Heart left ventricle (tissue), 16 donors: ENCODE measurements at regions of chr18 and their contacts with region 1.

Region 1: GRCh38 chr18:25351777-25352628 is at the start of gene ZNF521:
- DNase-seq: peak; percentile 89 to 90 (median 90)
- ATAC-seq: peak; percentile 83 to 93 (median 87)
- H3K4me3 ChIP-seq: peak within 1 kb of the TSS; percentile 52 to 89 (median 78)
- H3K27ac ChIP-seq: peak within 1 kb of the TSS; percentile 80 to 95 (median 91)
- H3K4me1 ChIP-seq: peaks cover 0 to 24% (median 7%) of the 10 kb centered on the region in 12 donors
- H3K27me3 ChIP-seq: peaks cover 0 to 31% (median 0%) of the 10 kb centered on the region in 9 donors
- CTCF ChIP-seq: peak in 8 of 12 donors; percentile 16 to 45 (median 30)
- POLR2A ChIP-seq: peak in 1 of 2 donors; percentile 68
- total RNA-seq, gene ZNF521: 12.2 to 24.4 (median 15.2) TPM

Region 2: GRCh38 chr18:24878289-24878688 is 473.7 kb before region 1 on chr18:
- intact Hi-C with region 1: loop called in 8 of 10 experiments (anchors 2 to 10 kb)
- DNase-seq: peak in 1 of 5 donors; percentile 19
- ATAC-seq: peak; percentile 47 to 71 (median 58)
- H3K4me3 ChIP-seq: no peak overlapping the region
- H3K27ac ChIP-seq: no peak overlapping the region
- H3K4me1 ChIP-seq: peaks cover 0 to 5% (median 0%) of the 10 kb centered on the region in 12 donors
- H3K27me3 ChIP-seq: no peaks in the 10 kb centered on the region
- CTCF ChIP-seq: peak; percentile 35 to 80 (median 66)
- POLR2A ChIP-seq: no peak

Region 3: DNA sequence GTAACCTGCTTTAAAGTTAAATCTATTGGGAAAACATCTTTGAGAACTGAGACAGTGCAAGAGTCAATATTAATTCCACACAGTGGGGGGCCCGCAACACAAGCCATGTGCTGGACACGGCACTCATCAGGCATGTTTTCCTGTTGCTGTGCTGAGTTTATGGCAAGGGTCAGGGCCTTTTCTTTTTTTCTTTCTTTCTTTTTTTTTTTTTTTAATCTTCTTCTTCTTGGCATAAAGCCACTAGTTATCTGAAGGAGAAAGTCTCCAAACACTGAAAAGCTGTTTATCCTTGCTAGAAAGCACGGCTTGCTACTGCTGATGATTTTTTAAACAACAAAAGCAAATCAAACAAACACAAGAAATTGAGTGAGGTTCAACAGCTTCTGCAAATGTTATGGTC is 252.1 kb before region 1 on chr18:
- intact Hi-C with region 1: loop called in 1 of 10 experiments (anchors 10 kb)
- DNase-seq: peak in 1 of 5 donors; percentile 29
- ATAC-seq: peak in 1 of 4 donors; percentile 32
- H3K4me3 ChIP-seq: no peak overlapping the region
- H3K27ac ChIP-seq: no peak overlapping the region
- H3K4me1 ChIP-seq: peaks cover 0 to 36% (median 10%) of the 10 kb centered on the region in 12 donors
- H3K27me3 ChIP-seq: no peaks in the 10 kb centered on the region
- CTCF ChIP-seq: no peak
- POLR2A ChIP-seq: no peak

Region 4: DNA sequence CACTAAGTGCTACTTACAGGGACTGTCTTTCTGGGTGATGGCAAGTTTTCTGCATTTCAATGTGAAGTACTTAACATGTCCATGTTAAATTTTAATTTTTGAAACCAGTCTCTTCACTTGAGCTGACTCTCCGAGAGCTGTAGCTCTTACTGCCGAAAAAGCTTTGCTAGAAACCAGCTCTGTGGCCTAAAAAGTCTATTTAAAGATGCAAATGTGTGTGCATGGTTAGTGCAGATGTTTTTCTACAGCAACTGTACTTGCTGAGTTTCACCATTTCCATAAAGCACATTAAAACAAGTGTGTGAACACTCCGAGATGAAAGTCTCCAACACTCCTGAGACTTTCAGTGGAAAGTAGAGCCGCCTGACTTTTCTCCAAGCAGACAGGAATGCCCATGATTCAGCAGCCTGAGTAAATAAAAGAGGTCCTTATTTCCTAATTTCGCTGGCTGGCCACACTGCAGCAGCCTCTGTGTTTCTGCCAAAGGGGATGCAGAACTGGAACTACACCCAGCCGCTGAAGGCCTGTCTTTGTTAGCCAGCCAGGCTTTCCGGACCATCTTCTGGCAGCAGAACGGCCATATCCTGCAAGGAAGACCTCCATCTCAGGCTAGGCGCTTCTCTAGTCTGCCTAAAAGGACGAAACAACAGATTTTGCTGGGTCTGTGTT is 121.2 kb before region 1 on chr18:
- intact Hi-C with region 1: loop called in 9 of 10 experiments (anchors 2 to 10 kb)
- DNase-seq: peak; percentile 72 to 85 (median 79)
- ATAC-seq: peak; percentile 75 to 92 (median 87)
- H3K4me3 ChIP-seq: peak overlapping the region in 3 of 12 donors; percentile 2 to 27 (median 3)
- H3K27ac ChIP-seq: peak overlapping the region; percentile 43 to 74 (median 64)
- H3K4me1 ChIP-seq: peaks cover 6 to 73% (median 46%) of the 10 kb centered on the region in 12 donors
- H3K27me3 ChIP-seq: no peaks in the 10 kb centered on the region
- CTCF ChIP-seq: no peak
- POLR2A ChIP-seq: no peak

Region 5: DNA sequence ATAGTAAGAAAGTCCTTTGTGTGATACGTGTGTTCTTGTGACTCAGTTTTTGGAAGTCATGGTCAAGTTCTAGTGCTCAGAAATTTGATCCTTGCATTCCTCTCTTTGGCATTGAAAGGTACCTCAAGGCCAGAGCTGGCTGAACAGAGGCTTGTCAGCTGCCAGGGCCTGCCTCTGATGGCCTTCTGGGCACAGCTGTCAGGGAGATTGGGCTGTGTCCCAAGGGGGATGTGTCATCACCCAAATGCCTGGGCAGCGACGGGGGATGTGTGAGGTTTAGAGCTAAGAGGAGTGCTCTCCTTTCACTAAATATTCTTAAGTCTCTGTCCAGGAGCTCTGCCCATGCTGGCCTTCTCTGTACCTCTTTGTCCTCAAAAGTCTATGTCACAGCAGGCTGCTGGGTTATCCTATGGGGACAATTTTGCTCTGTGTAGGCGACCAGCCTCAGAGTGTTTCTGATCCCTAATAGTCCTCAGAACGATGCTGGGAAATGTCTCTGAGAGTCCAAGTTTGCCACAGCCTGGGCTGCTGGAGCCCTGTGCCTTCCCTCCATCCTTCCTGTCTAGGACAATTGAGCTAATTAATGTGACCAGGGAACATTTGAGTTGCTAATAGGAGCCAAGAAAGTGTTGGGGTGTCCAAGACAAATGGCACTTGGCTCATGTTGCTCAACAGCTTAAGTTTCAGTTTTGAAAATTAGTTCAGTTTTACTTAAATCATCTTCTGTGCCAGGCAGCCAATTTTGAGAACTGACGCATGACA is 115.4 kb after region 1 on chr18:
- intact Hi-C with region 1: loop called in 1 of 10 experiments (anchors 10 kb)
- DNase-seq: peak; percentile 59 to 87 (median 78)
- ATAC-seq: peak; percentile 98 to 99 (median 98)
- H3K4me3 ChIP-seq: no peak overlapping the region
- H3K27ac ChIP-seq: peak overlapping the region in 10 of 12 donors; percentile 18 to 64 (median 38)
- H3K4me1 ChIP-seq: peaks cover 0 to 27% (median 7%) of the 10 kb centered on the region in 12 donors
- H3K27me3 ChIP-seq: no peaks in the 10 kb centered on the region
- CTCF ChIP-seq: no peak
- POLR2A ChIP-seq: no peak

Region 6: DNA sequence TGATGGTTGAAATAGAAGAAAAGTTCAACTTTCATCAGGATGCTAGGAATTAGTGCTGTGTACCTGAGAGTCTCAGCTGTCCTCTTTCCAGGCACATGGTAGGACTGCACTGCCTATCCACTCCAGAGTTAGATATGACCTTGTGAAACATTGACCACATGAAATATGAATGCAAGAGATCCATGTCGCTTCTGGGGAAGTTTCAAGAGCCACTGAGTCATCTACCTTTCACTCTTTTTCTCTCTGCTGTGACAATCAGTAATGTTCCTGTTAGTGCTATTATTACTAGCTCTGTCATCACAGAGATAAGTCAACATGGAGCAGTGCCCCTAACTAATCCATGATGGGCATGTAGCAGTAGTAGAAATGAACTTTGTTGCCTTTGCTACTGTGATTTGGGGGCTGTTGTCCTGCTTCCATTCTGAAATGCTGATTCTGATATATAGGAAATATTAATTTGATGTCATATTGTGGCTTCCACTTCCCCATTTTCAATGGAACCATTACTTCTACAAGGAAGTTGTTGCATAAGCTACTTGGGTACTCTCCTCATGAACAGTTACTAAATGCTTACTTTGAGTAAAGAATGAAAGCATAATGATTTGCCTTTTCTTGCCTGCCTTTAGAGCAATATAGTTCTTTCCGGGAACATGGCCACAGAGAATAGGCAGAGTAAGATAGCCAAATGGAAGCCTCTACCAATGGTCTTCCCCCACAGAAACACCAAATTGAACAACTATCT is 192.7 kb after region 1 on chr18:
- intact Hi-C with region 1: no loop called
- DNase-seq: no peak
- ATAC-seq: no peak
- H3K4me3 ChIP-seq: no peak overlapping the region
- H3K27ac ChIP-seq: no peak overlapping the region
- H3K4me1 ChIP-seq: no peaks in the 10 kb centered on the region
- H3K27me3 ChIP-seq: no peaks in the 10 kb centered on the region
- CTCF ChIP-seq: no peak
- POLR2A ChIP-seq: no peak

Region 7: DNA sequence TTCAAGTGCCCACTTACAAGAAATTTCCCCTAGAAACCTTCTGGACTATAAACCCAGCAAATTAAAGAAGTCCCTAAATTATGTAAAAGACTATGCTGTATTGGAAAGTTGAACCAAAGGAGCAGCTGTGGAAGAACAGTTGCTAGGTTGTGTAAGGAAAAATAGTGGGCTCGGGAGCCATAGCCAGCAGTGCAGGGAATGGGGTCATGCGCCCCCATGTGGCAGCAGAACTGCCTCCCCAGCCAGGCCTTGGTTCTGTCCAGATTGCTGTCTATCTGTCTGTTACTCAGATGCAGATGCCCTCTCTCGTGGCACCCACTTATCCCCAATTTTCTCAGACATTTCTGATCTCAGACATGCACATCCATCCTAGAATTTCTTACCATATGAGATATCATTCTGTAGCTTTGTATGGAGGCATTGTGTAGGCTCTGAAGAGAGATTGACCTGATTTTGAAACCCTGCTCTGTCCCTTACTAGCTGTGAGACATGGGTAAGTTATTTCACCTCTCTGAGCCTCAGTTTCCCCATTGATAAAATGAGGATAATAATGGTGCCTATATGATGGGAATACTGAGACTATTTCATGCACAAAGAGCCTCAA is 480.1 kb after region 1 on chr18:
- intact Hi-C with region 1: loop called in 1 of 10 experiments (anchors 5 kb)
- DNase-seq: peak; percentile 43 to 77 (median 65)
- ATAC-seq: peak; percentile 79 to 90 (median 86)
- H3K4me3 ChIP-seq: no peak overlapping the region
- H3K27ac ChIP-seq: no peak overlapping the region
- H3K4me1 ChIP-seq: peaks cover 0 to 12% (median 0%) of the 10 kb centered on the region in 12 donors
- H3K27me3 ChIP-seq: no peaks in the 10 kb centered on the region
- CTCF ChIP-seq: peak; percentile 60 to 83 (median 70)
- POLR2A ChIP-seq: no peak